Sciatic nerve (tissue), 2 donors: ENCODE measurements at regions of chr16 and their contacts with region 1.

Region 1: DNA sequence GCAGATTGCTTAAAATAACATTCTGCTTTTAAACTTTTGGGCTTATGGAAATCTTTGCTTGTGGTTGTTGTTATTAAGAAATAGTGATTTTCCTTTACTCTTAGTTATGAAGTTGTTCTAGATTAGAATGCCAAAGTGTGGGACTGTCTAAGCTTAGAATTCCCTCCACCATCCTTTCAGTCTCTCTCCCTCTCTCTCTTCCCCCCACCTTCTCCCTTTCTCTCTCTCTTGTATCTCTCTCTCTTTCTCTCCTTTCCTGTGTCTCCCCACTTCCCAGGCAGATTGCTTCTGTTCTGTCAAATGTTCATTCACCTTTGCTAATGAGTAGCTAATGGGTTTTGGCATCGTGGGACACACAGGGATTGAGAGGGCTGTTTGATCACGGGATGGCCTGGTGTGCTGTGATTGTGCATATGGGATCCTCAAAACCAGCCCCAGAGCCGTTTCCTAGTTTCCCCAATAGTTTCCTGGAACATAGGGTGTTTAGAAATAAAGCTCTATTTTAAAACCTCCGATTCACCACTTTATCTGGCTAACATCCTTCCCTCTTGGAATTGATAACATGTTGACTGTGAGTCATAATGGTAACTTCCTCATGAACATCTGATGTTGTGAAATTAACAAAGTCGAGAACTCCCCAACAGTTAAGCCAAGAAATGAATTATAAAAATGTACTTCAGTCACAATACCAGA is 502.6 kb downstream of the TMEM114 start:
- DNase-seq: no peak
- ATAC-seq: peak; percentile 62

Region 2: DNA sequence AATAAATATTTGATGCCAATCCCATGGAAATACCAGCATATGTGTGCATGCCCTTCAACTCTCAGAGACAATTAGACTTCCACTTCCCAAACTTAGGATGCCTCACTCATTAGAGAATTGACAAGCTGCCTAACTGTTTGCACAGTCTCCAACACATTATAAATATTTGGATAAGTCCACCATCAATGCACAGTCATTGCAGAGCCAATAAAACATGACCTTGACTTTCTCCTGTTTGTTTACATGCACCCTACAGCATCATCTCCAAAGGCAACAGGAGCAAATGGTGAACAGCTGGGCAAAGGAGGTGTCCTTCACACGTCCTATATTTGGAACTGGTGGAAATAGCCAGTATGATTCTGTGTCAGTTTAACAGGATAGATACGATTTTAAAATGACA is 1559.5 kb before region 1 on chr16:
- intact Hi-C with region 1: loop called (anchors 10 kb)
- DNase-seq: no peak
- ATAC-seq: no peak

Region 3: GRCh38 chr16:8505327-8505991 is 417.7 kb after region 1 on chr16:
- intact Hi-C with region 1: no loop called
- DNase-seq: no peak
- ATAC-seq: no peak